ENCODE measurements at regions of chr6 and their contacts with region 1.

Region 1: DNA sequence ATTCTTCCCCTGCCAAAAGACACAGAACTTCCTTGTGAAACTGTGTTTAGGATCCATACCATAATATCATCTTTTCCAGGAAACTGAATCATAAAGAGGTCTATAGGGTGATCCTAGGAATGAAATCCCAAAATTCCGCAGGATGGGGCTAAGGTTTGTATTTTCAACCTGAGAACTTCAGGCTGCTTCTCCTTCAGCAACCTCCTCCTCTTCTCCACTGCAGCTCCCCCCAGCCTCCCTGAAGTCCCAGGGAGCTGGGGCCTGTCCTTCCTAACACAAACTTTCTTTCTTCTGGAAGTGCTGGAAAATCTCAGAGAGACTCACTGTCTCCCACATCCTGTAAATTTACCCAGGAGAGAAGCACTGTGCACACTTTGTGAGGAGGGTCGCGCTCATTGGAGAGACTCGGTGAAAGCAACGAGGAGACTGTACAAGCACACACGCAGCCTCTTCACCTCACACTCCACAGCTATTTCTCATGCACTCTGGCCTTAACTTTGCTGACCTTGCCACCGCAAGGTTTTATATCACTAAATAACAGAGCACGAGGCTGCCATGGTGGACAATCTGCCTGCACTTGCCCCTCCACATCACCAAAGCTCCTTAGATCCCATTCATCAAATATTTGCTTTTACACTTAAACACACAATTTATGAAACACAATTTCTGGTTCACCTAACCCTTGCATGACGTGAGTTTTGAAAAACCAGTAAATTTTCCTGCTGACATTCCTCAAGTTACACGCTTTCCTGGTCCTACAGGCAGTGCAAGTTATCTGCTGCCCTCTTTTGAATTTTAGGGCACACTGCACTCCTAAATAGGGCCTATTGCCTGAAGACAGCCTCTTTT is 14.3 kb downstream of the ID4 start:
- DNase-seq: peak; percentile 14
- H3K4me3 ChIP-seq: no peak overlapping the region
- H3K27ac ChIP-seq: peak overlapping the region in 3 of 4 donors; percentile 3 to 48 (median 35)
- H3K4me1 ChIP-seq: peaks cover 0 to 8% (median 5%) of the 10 kb centered on the region in 4 donors
- H3K27me3 ChIP-seq: no peaks in the 10 kb centered on the region
- CTCF ChIP-seq: peak; percentile 73 to 86 (median 80)
- EP300 ChIP-seq: no peak
- POLR2A ChIP-seq: no peak

Region 2: DNA sequence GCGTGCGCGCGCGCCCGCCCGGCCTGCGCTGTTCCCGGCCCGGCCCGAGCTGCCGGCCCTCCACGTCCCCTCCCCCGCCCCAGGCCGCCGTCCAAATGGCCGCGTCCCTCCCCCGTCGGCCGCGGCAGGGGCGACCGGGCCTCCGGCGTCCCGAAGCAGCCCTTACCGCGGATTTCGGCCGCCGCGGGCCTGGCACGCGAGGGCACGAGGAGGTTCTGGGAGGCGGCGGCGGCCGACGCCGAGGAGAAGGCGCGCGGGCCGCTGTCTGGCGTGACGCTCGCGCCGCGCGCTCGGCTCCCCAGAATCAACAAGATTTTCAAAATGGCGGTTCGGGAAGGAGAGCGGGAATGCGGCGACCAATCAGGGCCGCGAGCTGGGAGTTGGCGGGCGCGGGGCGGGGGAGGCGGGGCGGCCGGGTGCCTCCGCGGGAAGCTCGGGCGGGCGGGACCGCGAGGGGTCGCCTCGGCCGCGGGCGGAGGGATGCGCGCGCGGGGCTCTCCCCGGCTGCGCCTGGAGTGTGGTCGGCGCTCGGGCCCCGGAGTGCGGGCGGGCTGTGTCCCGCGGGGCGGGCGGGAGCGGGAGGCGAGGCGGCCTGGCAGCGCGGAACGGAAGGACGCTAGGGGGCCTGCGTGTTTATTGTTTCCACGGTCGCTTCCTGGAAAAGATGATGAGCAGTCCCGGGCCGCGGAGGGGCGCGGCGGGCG is 1587.1 kb before region 1 on chr6 and contains the start of gene DEK:
- in situ Hi-C with region 1: no loop called
- intact Hi-C with region 1: no loop called
- DNase-seq: peak; percentile 89
- H3K4me3 ChIP-seq: peak within 1 kb of the TSS; percentile 46 to 99 (median 86)
- H3K27ac ChIP-seq: peak within 1 kb of the TSS; percentile 93 to 100 (median 96)
- H3K4me1 ChIP-seq: peaks cover 24 to 39% (median 32%) of the 10 kb centered on the region in 4 donors
- H3K27me3 ChIP-seq: no peaks in the 10 kb centered on the region
- CTCF ChIP-seq: peak in 4 of 5 experiments; percentile 47 to 62 (median 58)
- EP300 ChIP-seq: no peak
- POLR2A ChIP-seq: peak; percentile 30
- total RNA-seq, gene DEK: 96.9 to 175 (median 111) TPM

Region 3: GRCh38 chr6:18742406-18742805 is 1109.1 kb before region 1 on chr6:
- in situ Hi-C with region 1: no loop called
- intact Hi-C with region 1: loop called (anchors 10 kb)
- DNase-seq: no peak
- H3K4me3 ChIP-seq: no peak overlapping the region
- H3K27ac ChIP-seq: no peak overlapping the region
- H3K4me1 ChIP-seq: no peaks in the 10 kb centered on the region
- H3K27me3 ChIP-seq: no peaks in the 10 kb centered on the region
- CTCF ChIP-seq: no peak
- EP300 ChIP-seq: no peak
- POLR2A ChIP-seq: no peak

Region 4: DNA sequence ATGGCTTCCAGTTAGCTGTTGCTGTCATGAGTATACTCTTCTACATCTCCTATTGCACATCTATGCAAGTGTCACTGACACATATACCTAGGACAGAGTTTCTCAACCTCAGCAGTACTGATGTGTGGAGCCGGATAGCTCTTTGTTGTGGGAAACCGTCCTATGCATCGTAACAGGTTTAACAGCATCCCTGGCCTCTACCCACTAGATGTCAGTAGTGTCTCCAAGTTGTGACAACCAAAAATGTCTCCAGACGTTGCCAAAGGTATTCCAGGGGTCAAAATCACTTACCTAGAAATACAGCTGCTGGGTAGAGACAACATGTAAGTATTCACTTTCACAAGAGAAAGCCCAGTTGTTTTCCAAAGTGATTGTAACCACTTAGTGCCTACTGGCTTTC is 826.7 kb before region 1 on chr6:
- in situ Hi-C with region 1: loop called in 2 of 4 experiments (anchors 25 kb)
- intact Hi-C with region 1: no loop called
- DNase-seq: no peak
- H3K4me3 ChIP-seq: no peak overlapping the region
- H3K27ac ChIP-seq: no peak overlapping the region
- H3K4me1 ChIP-seq: no peaks in the 10 kb centered on the region
- H3K27me3 ChIP-seq: no peaks in the 10 kb centered on the region
- CTCF ChIP-seq: peak in 4 of 5 experiments; percentile 16 to 32 (median 28)
- EP300 ChIP-seq: no peak
- POLR2A ChIP-seq: no peak

Measured in transverse colon (tissue), 4 donors.